Heart left ventricle (tissue), 16 donors: ENCODE measurements at regions of chr7 and their contacts with region 1.

Region 1: DNA sequence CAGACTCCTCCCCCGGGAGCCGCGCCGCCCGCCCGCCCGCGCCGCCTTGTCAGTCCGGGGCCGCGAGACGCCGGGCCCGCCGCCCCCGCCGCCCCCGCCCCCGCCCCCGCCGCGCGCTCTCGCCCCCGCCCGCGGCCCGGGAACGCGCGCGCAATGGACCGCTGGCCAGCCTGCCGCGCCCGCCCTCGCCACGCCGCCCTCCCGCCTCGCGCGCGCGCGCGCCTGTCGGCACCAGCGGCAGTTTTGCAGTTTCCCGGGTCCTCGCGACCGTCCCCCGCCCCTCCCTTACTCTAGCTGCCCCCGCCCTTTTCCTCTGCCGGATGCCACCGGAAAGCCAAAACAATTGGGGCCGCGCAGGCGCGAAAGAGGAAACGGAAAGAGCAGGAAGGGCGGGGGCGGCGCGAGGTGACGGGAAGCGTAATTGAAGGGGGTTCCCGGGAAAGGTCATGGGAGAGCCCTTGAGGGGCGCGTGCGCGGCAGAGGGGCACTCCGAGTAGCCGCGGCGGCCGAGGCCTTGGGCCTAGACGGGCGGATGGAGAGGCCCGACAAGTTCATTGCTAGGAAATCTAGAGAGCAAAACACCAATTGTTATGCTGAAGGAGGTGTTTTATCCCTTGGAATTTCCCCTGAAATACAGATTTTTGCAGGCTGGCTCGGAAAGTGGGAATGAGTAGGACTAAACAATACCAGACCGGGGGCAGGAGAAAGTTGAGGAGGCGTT is 400 bp upstream of the KBTBD2 start:
- DNase-seq: peak; percentile 99
- ATAC-seq: peak; percentile 88 to 93 (median 91)
- H3K4me3 ChIP-seq: peak overlapping the region; percentile 64 to 98 (median 80)
- H3K27ac ChIP-seq: peak overlapping the region; percentile 93 to 100 (median 98)
- H3K4me1 ChIP-seq: peaks cover 10 to 50% (median 45%) of the 10 kb centered on the region in 12 donors
- H3K27me3 ChIP-seq: no peaks in the 10 kb centered on the region
- CTCF ChIP-seq: no peak
- POLR2A ChIP-seq: peak in 1 of 2 donors; percentile 70

Region 2: DNA sequence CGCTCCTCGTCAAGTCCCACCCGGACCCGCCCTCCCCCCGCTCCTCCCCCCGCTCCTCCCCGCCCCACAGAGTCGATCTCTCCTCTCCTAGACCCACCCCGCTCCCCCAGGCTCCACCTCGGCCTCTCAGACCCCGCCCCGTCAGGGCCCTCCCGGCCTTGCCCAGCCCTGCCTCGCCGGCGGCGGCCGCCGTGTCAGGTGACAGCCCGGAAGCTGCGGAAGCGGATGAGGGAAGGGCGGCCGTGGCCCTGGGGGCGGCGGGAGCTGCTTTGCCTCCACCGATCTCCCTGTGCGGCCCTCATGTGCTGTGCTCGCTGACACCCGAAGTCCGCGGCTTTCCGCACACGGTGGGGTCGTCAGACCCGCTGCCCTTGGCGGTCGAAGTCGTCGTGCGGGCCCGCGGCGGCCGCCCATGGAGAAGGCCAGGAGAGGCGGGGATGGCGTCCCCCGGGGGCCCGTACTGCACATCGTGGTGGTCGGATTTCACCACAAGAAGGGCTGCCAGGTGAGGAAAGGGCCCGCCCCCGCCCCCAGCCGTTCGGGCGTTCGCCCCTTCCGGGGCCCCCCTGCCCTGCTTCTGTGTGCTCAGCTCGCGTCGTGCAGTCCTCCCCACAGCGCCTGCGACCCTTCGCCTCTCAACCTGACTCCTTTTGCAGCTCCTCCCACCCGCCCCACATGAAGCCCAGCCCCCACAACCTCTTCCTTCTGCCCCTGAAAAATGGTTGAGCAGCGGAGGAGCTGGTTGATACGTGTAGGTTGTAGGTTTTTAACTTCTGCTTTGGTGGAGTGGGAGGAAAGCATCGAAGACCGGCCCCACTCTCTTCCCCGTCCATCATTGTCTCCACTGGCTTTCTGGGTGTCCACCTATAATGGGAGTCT is 396.4 kb before region 1 on chr7 and contains the start of gene AVL9:
- intact Hi-C with region 1: loop called in 1 of 10 experiments (anchors 10 kb)
- DNase-seq: peak; percentile 98 to 100 (median 99)
- ATAC-seq: peak; percentile 98 to 100 (median 99)
- H3K4me3 ChIP-seq: peak within 1 kb of the TSS; percentile 71 to 96 (median 92)
- H3K27ac ChIP-seq: peak within 1 kb of the TSS; percentile 85 to 99 (median 96)
- H3K4me1 ChIP-seq: peaks cover 0 to 31% (median 14%) of the 10 kb centered on the region in 12 donors
- H3K27me3 ChIP-seq: no peaks in the 10 kb centered on the region
- CTCF ChIP-seq: no peak
- POLR2A ChIP-seq: peak in 1 of 2 donors; percentile 84
- total RNA-seq, gene AVL9: 7.1 to 22.3 (median 16.7) TPM

Region 3: DNA sequence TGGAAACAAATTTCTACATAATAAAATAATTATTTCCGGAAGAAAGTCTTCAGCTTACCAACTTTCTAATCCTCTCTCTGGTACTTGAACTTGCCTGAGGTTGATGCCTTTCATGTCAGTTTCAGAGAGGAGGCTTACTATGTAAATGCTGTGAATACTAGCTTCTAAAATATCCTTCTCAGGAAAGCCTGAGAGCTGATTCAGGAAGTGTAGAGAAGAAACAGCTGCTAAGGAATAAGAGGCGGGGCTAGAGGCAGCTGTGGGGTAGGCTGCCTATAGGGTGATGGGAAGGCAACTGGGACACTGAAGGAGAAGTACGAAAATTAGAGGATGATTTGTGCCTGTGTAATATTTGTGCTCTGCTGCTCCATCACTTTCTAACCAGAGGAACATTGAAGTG is 327.4 kb before region 1 on chr7:
- intact Hi-C with region 1: no loop called
- DNase-seq: no peak
- ATAC-seq: peak in 3 of 4 donors; percentile 57 to 71 (median 66)
- H3K4me3 ChIP-seq: no peak overlapping the region
- H3K27ac ChIP-seq: peak overlapping the region in 2 of 12 donors; percentile 5 to 18
- H3K4me1 ChIP-seq: peaks cover 0 to 6% (median 0%) of the 10 kb centered on the region in 12 donors
- H3K27me3 ChIP-seq: no peaks in the 10 kb centered on the region
- CTCF ChIP-seq: no peak
- POLR2A ChIP-seq: no peak

Region 4: DNA sequence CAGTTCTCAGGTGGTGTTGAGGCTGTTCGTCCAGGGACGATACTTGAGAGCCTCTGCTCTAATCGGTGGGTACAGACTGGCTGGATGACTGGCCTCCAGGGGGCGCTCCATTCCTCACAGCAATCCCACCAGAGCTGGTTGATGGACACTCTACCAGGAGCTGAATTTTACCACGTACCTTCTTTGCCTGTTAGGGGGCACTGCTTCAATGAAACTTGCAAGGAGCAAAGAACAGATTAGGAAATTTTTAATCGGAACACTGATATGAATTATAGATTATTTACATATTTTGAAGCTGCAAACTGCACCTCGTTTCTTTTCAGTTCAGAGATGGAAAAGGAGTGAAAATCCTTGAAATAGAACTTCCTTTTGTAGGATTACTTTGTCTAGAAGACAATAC is 45.3 kb before region 1 on chr7:
- intact Hi-C with region 1: loop called in 5 of 10 experiments (anchors 2 to 10 kb)
- DNase-seq: peak; percentile 79 to 93 (median 90)
- ATAC-seq: peak; percentile 90 to 100 (median 100)
- H3K4me3 ChIP-seq: peak overlapping the region in 2 of 12 donors; percentile 6 to 25
- H3K27ac ChIP-seq: no peak overlapping the region
- H3K4me1 ChIP-seq: peaks cover 0 to 8% (median 3%) of the 10 kb centered on the region in 12 donors
- H3K27me3 ChIP-seq: no peaks in the 10 kb centered on the region
- CTCF ChIP-seq: peak; percentile 73 to 98 (median 94)
- POLR2A ChIP-seq: no peak

Region 5: DNA sequence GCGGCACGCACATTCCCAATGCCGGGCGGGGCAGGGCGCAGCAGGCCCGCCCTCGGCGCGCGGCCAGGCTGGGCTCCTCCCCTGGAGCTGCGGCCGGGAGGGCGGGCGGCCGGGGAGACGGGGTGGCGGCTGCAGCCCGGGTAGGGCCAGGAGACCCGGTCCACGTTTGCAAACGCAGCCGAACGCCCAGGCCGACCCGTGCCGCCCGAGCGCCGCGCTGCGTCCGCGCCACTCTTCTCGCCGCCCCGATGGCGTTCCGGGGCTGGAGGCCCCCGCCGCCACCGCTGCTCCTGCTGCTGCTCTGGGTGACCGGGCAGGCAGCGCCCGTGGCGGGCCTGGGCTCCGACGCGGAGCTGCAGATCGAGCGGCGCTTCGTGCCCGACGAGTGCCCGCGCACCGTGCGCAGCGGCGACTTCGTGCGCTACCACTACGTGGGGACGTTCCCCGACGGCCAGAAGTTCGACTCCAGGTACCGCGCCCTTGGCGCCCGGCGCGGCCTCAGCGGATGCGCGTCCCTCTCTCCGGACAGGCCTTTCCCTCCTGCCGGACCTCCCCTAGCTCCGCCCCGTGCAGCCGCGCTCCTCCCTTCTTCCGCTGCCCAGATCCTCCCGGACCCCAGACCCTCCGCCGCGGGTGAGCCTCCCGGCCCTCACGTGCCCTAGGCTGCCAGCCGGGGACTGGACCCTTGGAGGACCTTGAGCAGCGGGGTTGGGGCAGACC is 65.5 kb after region 1 on chr7 and contains the start of gene FKBP9:
- intact Hi-C with region 1: loop called in 4 of 10 experiments (anchors 5 kb)
- DNase-seq: peak; percentile 85 to 96 (median 90)
- ATAC-seq: peak; percentile 85 to 97 (median 94)
- H3K4me3 ChIP-seq: peak within 1 kb of the TSS; percentile 79 to 100 (median 92)
- H3K27ac ChIP-seq: peak within 1 kb of the TSS; percentile 89 to 100 (median 98)
- H3K4me1 ChIP-seq: peaks cover 0 to 32% (median 13%) of the 10 kb centered on the region in 12 donors
- H3K27me3 ChIP-seq: no peaks in the 10 kb centered on the region
- CTCF ChIP-seq: peak in 1 of 12 donors; percentile 6
- POLR2A ChIP-seq: peak in 1 of 2 donors; percentile 85
- total RNA-seq, gene FKBP9: 91.1 to 146 (median 130) TPM

Region 6: GRCh38 chr7:33109005-33109757 is 217.2 kb after region 1 on chr7 and contains the start of gene RP9:
- intact Hi-C with region 1: loop called in 1 of 10 experiments (anchors 5 kb)
- DNase-seq: peak; percentile 60 to 88 (median 74)
- ATAC-seq: peak; percentile 28 to 93 (median 80)
- H3K4me3 ChIP-seq: peak within 1 kb of the TSS; percentile 70 to 97 (median 94)
- H3K27ac ChIP-seq: peak within 1 kb of the TSS; percentile 16 to 91 (median 85)
- H3K4me1 ChIP-seq: peaks cover 16 to 47% (median 33%) of the 10 kb centered on the region in 12 donors
- H3K27me3 ChIP-seq: no peaks in the 10 kb centered on the region
- CTCF ChIP-seq: peak; percentile 21 to 87 (median 62)
- POLR2A ChIP-seq: peak in 1 of 2 donors; percentile 6
- total RNA-seq, gene RP9: 12.4 to 25.9 (median 18.0) TPM